Naive thymus-derived CD8-positive, alpha-beta T cell (primary cell): ENCODE measurements at regions of chr19 and their contacts with region 1.

Region 1: GRCh38 chr19:19663256-19664038 is at the start of gene ATP13A1:
- DNase-seq: peak; percentile 81 to 98 (median 93)
- ATAC-seq: peak; percentile 73 to 76
- H3K4me3 Mint-ChIP-seq: peak within 1 kb of the TSS; percentile 83 to 97 (median 94)
- H3K27ac Mint-ChIP-seq: peak within 1 kb of the TSS; percentile 93 to 100 (median 98)
- H3K4me1 Mint-ChIP-seq: peaks cover 23 to 50% (median 40%) of the 10 kb centered on the region in 4 donors
- H3K27me3 Mint-ChIP-seq: peaks cover 0 to 3% (median 0%) of the 10 kb centered on the region in 5 donors
- polyA plus RNA-seq, gene ATP13A1: 15.3 to 46.7 (median 20.7) TPM

Region 2: GRCh38 chr19:19399733-19400433 is 263.6 kb before region 1 on chr19:
- POLR2A ChIA-PET with region 1: no interaction called
- DNase-seq: no peak
- ATAC-seq: no peak
- H3K4me3 Mint-ChIP-seq: no peak overlapping the region
- H3K27ac Mint-ChIP-seq: peak overlapping the region in 6 of 10 donors; percentile 11 to 52 (median 46)
- H3K4me1 Mint-ChIP-seq: peaks cover 18 to 64% (median 46%) of the 10 kb centered on the region in 4 donors
- H3K27me3 Mint-ChIP-seq: no peaks in the 10 kb centered on the region

Region 3: DNA sequence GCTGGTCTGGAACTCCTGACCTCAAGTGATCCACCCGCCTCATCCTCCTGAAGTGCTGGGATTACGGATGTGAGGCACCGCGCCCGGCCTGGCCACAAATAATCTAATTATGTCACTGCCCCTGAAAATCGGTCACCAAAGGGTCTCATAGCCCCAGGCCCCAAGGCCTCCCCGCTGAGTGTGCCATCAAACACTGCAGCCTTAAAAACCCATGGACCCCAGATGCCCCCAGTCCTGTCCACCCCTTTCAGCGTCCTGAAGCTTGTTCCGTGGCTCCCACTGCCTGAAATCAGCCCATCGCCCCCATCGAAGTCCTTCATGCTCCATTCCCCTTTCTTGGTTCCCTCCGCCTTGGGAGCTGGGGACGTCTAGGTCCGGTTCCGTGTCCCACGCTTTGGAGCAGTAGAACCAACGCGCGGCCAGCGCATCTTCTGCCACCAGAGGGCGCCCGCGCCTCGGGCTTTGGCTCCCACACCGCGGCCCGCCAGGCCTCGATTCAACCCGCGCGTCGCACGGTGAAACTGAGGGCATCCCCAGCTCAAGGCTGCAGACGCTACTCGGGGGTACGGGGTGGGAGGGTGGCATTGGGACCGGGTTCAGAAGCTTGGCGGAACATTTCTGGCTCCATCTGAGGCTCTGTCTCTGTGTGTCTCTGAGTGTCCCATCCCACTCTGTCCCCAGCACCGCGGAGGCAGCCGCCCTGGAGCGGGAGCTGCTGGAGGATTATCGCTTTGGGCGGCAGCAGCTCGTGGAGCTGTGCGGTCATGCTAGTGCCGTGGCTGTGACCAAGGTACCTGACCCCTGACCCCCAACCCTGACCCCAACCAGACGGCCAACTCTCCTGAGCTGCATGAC is 131.3 kb before region 1 on chr19:
- POLR2A ChIA-PET with region 1: interaction called, 18 read pairs
- DNase-seq: peak; percentile 73 to 90 (median 85)
- ATAC-seq: peak; percentile 83 to 89
- H3K4me3 Mint-ChIP-seq: peak overlapping the region in 3 of 10 donors; percentile 24 to 49 (median 28)
- H3K27ac Mint-ChIP-seq: peak overlapping the region in 7 of 10 donors; percentile 37 to 98 (median 88)
- H3K4me1 Mint-ChIP-seq: peaks cover 4 to 21% (median 17%) of the 10 kb centered on the region in 4 donors
- H3K27me3 Mint-ChIP-seq: no peaks in the 10 kb centered on the region

Region 4: DNA sequence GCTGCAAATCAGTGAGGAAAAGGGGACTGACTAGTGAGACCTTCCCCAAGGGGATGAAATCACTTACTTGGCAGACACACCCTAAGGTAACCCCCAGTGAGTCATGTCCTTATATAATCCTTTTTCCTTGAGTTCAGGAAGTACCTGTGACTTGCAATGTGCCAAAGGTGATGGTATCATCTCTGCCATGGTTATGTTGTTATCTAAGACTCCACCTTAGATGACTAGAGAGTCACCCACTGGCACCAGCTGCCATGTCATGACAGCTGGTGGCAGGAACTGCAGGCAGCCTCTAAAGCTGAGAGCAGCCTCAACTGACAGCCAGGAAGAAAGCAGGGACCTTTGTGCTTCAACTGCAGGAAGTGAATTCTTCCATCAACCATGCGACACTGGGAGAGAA is 57.4 kb before region 1 on chr19:
- POLR2A ChIA-PET with region 1: interaction called, 15 read pairs
- DNase-seq: peak in 7 of 10 donors; percentile 37 to 73 (median 45)
- ATAC-seq: peak; percentile 73 to 85
- H3K4me3 Mint-ChIP-seq: peak overlapping the region in 8 of 10 donors; percentile 33 to 79 (median 62)
- H3K27ac Mint-ChIP-seq: peak overlapping the region; percentile 81 to 96 (median 92)
- H3K4me1 Mint-ChIP-seq: peaks cover 30 to 66% (median 50%) of the 10 kb centered on the region in 4 donors
- H3K27me3 Mint-ChIP-seq: no peaks in the 10 kb centered on the region

Region 5: DNA sequence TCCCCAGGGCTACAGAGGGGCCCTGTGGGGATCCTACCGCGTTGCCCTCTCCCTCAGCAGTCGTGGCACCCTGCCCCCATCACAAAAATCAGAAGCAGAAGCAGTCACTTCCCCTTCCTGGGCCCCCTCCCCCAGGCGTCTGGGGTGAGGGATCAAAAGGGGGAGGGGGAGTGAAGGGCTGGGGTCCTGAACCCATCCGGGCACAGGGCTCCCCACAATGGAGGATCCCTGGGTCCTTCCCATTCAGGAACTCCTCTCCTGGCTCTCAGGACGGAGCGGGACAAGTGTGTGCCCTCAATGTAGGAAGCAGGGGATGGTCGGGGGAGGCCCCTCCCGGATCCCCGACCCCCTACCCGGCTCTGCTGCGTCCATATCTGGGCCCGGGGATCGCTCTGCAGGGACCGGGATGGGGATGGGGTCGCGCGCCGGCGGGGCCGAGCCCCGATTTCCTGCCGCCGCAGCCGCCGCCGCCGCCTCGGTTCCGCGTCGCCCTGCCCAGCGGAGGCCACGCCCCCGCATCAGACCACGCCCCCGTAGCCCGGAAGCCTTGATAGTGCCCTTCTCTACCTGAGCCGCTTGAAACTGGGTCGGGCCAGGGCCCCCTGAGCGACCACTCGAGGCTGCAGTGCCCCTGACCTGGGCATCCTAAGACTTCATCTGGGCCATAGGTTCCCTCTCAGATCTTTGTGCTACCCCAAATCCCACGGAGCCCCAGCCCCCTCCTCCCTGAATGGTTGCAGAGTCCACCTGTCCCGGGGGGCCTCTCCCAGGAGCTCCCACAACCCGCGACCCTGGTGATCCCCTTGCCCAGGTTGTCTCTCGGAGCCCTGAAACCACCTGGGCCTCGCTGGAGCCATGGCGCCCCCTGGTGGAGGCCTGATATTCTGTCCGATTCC is 20.0 kb before region 1 on chr19 and contains the start of gene GMIP:
- POLR2A ChIA-PET with region 1: interaction called, 45 read pairs
- DNase-seq: peak; percentile 77 to 94 (median 88)
- ATAC-seq: peak; percentile 91 to 92
- H3K4me3 Mint-ChIP-seq: peak within 1 kb of the TSS; percentile 96 to 99 (median 98)
- H3K27ac Mint-ChIP-seq: peak within 1 kb of the TSS; percentile 87 to 99 (median 98)
- H3K4me1 Mint-ChIP-seq: peaks cover 13 to 27% (median 20%) of the 10 kb centered on the region in 4 donors
- H3K27me3 Mint-ChIP-seq: no peaks in the 10 kb centered on the region
- polyA plus RNA-seq, gene GMIP: 40.6 to 72.4 (median 41.9) TPM

Region 6: DNA sequence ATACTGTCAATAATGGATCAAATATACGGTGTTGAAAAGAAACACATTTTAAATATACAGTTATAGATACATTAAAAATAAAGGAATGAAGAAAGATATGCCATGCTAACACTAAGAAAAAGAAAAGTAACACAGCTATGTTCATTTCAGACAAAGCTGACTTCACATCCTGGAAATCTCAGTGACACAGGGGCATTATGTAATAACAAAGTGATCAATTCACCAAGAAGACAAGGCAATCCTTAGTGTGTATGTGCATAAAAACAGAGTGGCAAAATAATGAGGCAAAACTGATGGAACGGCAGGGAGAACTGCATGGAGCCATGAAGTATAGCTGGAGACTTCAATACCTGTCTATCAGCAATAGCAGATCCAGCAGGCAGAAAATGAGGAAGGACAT is 56.4 kb after region 1 on chr19:
- POLR2A ChIA-PET with region 1: interaction called, 13 read pairs
- DNase-seq: peak in 2 of 10 donors; percentile 32 to 46
- ATAC-seq: peak; percentile 60 to 64
- H3K4me3 Mint-ChIP-seq: peak overlapping the region in 1 of 10 donors; percentile 53
- H3K27ac Mint-ChIP-seq: peak overlapping the region in 1 of 10 donors; percentile 18
- H3K4me1 Mint-ChIP-seq: peaks cover 0 to 7% (median 3%) of the 10 kb centered on the region in 4 donors
- H3K27me3 Mint-ChIP-seq: no peaks in the 10 kb centered on the region

Region 7: DNA sequence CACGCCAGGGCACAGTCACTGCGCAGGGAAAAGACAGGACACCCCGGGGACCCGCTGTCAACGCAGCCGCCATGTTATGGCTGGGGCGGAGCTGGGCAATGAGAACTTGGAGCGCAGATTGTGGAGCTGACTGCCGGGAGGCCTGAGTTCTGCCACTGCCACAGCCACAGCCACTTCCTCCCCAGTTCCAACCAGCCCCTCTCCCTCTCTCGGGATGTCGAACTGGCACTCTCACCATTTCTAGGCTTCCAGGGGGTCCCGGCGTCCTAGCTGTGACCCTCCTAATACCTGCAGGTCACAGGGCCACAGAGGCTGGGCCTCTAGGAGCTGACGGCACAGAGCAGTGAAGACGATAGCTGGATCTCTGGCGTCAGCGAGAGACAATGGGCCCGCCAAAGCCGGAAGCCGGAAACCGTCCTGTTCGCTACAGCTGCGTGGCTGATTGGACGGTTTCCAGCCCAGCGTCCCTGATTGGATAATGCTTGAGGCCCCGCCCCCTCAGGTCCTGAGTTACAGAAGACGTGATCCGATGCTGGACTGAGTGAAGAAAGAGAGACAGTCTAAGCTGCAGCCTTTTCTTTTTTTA is 158.0 kb after region 1 on chr19 and contains the start of gene ZNF506:
- POLR2A ChIA-PET with region 1: interaction called, 114 read pairs
- DNase-seq: peak; percentile 91 to 99 (median 98)
- ATAC-seq: peak; percentile 81 to 82
- H3K4me3 Mint-ChIP-seq: peak within 1 kb of the TSS; percentile 99 to 100 (median 100)
- H3K27ac Mint-ChIP-seq: peak within 1 kb of the TSS; percentile 98 to 100 (median 100)
- H3K4me1 Mint-ChIP-seq: peaks cover 6 to 48% (median 37%) of the 10 kb centered on the region in 4 donors
- H3K27me3 Mint-ChIP-seq: no peaks in the 10 kb centered on the region
- polyA plus RNA-seq, gene ZNF506: 23.4 to 29.6 (median 27.8) TPM